ENCODE measurements at regions of chr12 and their contacts with region 1.

Region 1: GRCh38 chr12:92608151-92609091 is 94.4 kb upstream of the PLEKHG7 start:
- DNase-seq: no peak
- H3K4me3 ChIP-seq: no peak overlapping the region
- H3K27ac ChIP-seq: no peak overlapping the region
- H3K4me1 ChIP-seq: no peaks in the 10 kb centered on the region
- H3K27me3 ChIP-seq: no peaks in the 10 kb centered on the region
- CTCF ChIP-seq: peak; percentile 69

Region 2: DNA sequence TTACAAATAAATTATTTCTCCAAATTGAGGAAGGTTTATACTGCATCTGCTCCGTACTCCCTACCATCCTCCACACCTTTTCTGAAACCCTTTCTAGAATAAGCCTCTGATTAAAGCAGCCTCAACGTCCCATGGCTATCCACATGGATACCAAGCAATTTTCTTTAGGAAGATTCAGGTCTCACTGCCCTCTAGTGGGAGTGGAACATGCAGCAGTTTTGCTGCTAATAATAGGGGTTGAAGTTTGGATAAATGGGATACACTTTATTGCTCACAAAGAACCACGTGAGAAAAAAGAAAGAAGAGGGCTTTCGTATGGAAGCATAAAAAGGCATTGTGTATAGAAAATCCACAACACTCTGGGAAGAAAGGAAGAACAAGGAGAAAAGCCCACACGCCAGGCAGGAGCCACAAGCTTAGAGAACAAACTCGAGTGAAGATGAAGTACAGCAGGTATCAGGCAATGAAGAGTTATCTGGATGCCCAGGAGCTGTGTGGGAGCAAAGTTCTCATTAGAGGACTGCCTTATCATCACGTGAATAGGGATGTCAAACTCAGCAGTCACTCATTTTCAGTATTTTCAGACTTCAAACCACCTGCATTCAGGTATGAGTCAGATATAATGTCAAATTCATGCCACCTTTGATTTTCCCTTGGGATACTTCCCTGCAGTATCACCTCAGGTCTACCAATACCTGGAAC is 1699.2 kb before region 1 on chr12:
- CTCF ChIA-PET with region 1: interaction called, 20 read pairs
- POLR2A ChIA-PET with region 1: no interaction called
- intact Hi-C with region 1: no loop called
- DNase-seq: peak in 1 of 2 experiments; percentile 4
- H3K4me3 ChIP-seq: no peak overlapping the region
- H3K27ac ChIP-seq: no peak overlapping the region
- H3K4me1 ChIP-seq: peaks cover 4% of the 10 kb centered on the region; the same call in 1 of the 2 replicates
- H3K27me3 ChIP-seq: no peaks in the 10 kb centered on the region
- CTCF ChIP-seq: peak; percentile 86

Region 3: GRCh38 chr12:92007787-92008186 is 600.6 kb before region 1 on chr12:
- CTCF ChIA-PET with region 1: interaction called, 12 read pairs
- POLR2A ChIA-PET with region 1: no interaction called
- intact Hi-C with region 1: no loop called
- DNase-seq: no peak
- H3K4me3 ChIP-seq: no peak overlapping the region
- H3K27ac ChIP-seq: no peak overlapping the region
- H3K4me1 ChIP-seq: no peaks in the 10 kb centered on the region
- H3K27me3 ChIP-seq: no peaks in the 10 kb centered on the region
- CTCF ChIP-seq: no peak

Region 4: GRCh38 chr12:92244036-92244435 is 364.4 kb before region 1 on chr12:
- CTCF ChIA-PET with region 1: no interaction called
- POLR2A ChIA-PET with region 1: no interaction called
- intact Hi-C with region 1: no loop called
- DNase-seq: no peak
- H3K4me3 ChIP-seq: no peak overlapping the region
- H3K27ac ChIP-seq: no peak overlapping the region
- H3K4me1 ChIP-seq: no peaks in the 10 kb centered on the region
- H3K27me3 ChIP-seq: no peaks in the 10 kb centered on the region
- CTCF ChIP-seq: no peak

Region 5: GRCh38 chr12:92561543-92561899 is 46.9 kb before region 1 on chr12:
- CTCF ChIA-PET with region 1: no interaction called
- POLR2A ChIA-PET with region 1: no interaction called
- intact Hi-C with region 1: no loop called
- DNase-seq: no peak
- H3K4me3 ChIP-seq: no peak overlapping the region
- H3K27ac ChIP-seq: no peak overlapping the region
- H3K4me1 ChIP-seq: no peaks in the 10 kb centered on the region
- H3K27me3 ChIP-seq: no peaks in the 10 kb centered on the region
- CTCF ChIP-seq: no peak

Region 6: GRCh38 chr12:92574046-92574783 is 34.2 kb before region 1 on chr12:
- CTCF ChIA-PET with region 1: no interaction called
- POLR2A ChIA-PET with region 1: no interaction called
- intact Hi-C with region 1: no loop called
- DNase-seq: no peak
- H3K4me3 ChIP-seq: no peak overlapping the region
- H3K27ac ChIP-seq: no peak overlapping the region
- H3K4me1 ChIP-seq: 0 out of 2 replicates have a peak, but pooled peaks cover 5% of the 10 kb centered on the region
- H3K27me3 ChIP-seq: no peaks in the 10 kb centered on the region
- CTCF ChIP-seq: peak; percentile 43; the same call in 1 of the 2 replicates

Region 7: DNA sequence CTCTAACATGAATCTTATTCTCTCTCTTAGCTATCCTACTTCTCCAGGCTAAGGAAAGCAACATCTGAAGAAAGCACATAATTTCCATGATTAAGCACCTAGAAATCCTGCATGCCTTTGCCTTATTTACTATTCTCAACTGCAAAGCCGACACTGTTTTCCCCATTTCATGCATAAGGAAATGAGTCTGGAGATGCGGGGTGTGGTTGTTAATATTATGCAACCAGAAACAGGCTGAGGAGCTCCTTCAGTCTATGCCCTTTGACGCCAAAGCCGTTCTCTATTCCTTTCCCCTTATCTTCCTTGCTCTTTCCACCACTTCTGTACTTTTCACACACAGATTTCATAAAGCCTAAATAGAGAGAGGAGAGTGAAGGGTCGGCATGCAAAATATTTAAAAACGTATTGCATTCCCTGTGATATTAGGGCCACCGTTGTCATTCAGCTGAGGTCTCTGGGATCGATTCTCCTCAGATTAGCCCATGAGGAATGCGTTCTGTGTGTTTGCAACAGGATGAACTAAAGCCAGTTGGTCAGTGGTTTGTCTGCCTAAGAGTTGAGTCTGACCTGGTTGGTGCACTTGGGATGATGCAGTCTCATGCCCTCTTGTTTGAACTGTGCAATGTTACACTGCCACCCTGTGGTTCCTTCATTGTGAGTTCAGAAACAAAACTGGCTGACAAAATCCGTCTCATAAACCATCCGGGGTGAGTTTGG is 41.2 kb after region 1 on chr12:
- CTCF ChIA-PET with region 1: no interaction called
- POLR2A ChIA-PET with region 1: no interaction called
- intact Hi-C with region 1: loop called (anchors 2 kb)
- DNase-seq: peak; percentile 53 to 54
- H3K4me3 ChIP-seq: no peak overlapping the region
- H3K27ac ChIP-seq: no peak overlapping the region
- H3K4me1 ChIP-seq: peaks cover 15% of the 10 kb centered on the region
- H3K27me3 ChIP-seq: no peaks in the 10 kb centered on the region
- CTCF ChIP-seq: peak; percentile 78

Region 8: GRCh38 chr12:92995258-92995903 is 387.0 kb after region 1 on chr12:
- CTCF ChIA-PET with region 1: no interaction called
- POLR2A ChIA-PET with region 1: no interaction called
- intact Hi-C with region 1: no loop called
- DNase-seq: no peak
- H3K4me3 ChIP-seq: no peak overlapping the region
- H3K27ac ChIP-seq: no peak overlapping the region
- H3K4me1 ChIP-seq: no peaks in the 10 kb centered on the region
- H3K27me3 ChIP-seq: no peaks in the 10 kb centered on the region
- CTCF ChIP-seq: no peak

Measured in PC-9 (cell line).